ENCODE measurements at regions of chr11 and their contacts with region 1.

Region 1: DNA sequence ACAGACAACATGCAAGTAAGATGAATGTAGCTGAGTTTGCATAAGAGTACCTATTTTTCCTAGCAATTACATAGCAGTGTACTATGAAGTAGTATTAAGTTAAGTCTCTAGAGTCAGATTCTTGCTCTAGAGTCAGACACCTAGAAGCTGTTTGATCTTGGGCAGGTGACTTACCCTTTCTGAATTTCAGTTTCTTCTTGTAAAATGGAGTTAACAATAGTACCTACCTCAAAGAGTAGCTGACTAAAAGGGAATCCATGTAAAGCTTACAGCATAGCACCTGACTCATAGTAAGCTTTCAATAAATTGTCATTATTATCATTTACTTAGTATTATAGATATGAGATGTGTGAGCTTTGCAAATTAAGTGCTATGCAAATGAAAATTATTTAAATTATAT is 47.8 kb upstream of the PTPRJ start:
- DNase-seq: no peak
- ATAC-seq: no peak
- H3K4me3 ChIP-seq: no peak overlapping the region
- H3K27ac ChIP-seq: no peak overlapping the region
- H3K4me1 ChIP-seq: peaks cover 4 to 16% of the 10 kb centered on the region in 2 experiments; a peak in 3 of 4 replicates
- H3K27me3 ChIP-seq: no peaks in the 10 kb centered on the region
- CTCF ChIP-seq: no peak
- POLR2A ChIP-seq: no peak
- RAD21 ChIP-seq: no peak

Region 2: GRCh38 chr11:47991266-47991830 is 58.8 kb after region 1 on chr11:
- CTCF ChIA-PET with region 1: no interaction called
- POLR2A ChIA-PET with region 1: no interaction called
- RAD21 ChIA-PET with region 1: no interaction called
- intact Hi-C with region 1: loop called (anchors 5 kb)
- DNase-seq: no peak
- ATAC-seq: peak; percentile 5; the same call in 1 of the 2 replicates
- H3K4me3 ChIP-seq: peak overlapping the region; percentile 29 to 50
- H3K27ac ChIP-seq: peak overlapping the region; percentile 82
- H3K4me1 ChIP-seq: peaks cover 74 to 84% of the 10 kb centered on the region in 2 experiments
- H3K27me3 ChIP-seq: no peaks in the 10 kb centered on the region
- CTCF ChIP-seq: no peak
- POLR2A ChIP-seq: no peak
- RAD21 ChIP-seq: no peak

Region 3: GRCh38 chr11:48109046-48109666 is 176.6 kb after region 1 on chr11:
- CTCF ChIA-PET with region 1: interaction called, 62 read pairs
- POLR2A ChIA-PET with region 1: interaction called, 4 read pairs
- RAD21 ChIA-PET with region 1: interaction called, 4 to 5 read pairs
- intact Hi-C with region 1: loop called (anchors 1 kb)
- DNase-seq: peak; percentile 37
- ATAC-seq: peak; percentile 74
- H3K4me3 ChIP-seq: no peak overlapping the region
- H3K27ac ChIP-seq: 0 out of 2 replicates have a peak overlapping the region, but pooled peaks have one; percentile 14
- H3K4me1 ChIP-seq: peaks cover 17 to 26% of the 10 kb centered on the region in 2 experiments; a peak in 3 of 4 replicates
- H3K27me3 ChIP-seq: no peaks in the 10 kb centered on the region
- CTCF ChIP-seq: peak; percentile 26 to 63 (median 48); a peak in 4 of 6 replicates
- POLR2A ChIP-seq: no peak
- RAD21 ChIP-seq: peak; percentile 73